ENCODE measurements at regions of chr5 and their contacts with region 1.

Region 1: GRCh38 chr5:80884929-80885328 is 75.2 kb upstream of the RASGRF2 start:
- DNase-seq: no peak
- ATAC-seq: no peak
- H3K4me3 ChIP-seq: no peak overlapping the region
- H3K27ac ChIP-seq: no peak overlapping the region
- H3K4me1 ChIP-seq: peaks cover 0 to 11% (median 3%) of the 10 kb centered on the region in 12 donors
- H3K27me3 ChIP-seq: no peaks in the 10 kb centered on the region
- CTCF ChIP-seq: no peak
- POLR2A ChIP-seq: no peak

Region 2: GRCh38 chr5:80825786-80826460 is 59.0 kb before region 1 on chr5:
- intact Hi-C with region 1: loop called in 1 of 10 experiments (anchors 10 kb)
- DNase-seq: no peak
- ATAC-seq: no peak
- H3K4me3 ChIP-seq: no peak overlapping the region
- H3K27ac ChIP-seq: no peak overlapping the region
- H3K4me1 ChIP-seq: peaks cover 0 to 10% (median 6%) of the 10 kb centered on the region in 12 donors
- H3K27me3 ChIP-seq: no peaks in the 10 kb centered on the region
- CTCF ChIP-seq: no peak
- POLR2A ChIP-seq: no peak

Region 3: GRCh38 chr5:80985600-80986228 is 100.8 kb after region 1 on chr5:
- intact Hi-C with region 1: no loop called
- DNase-seq: peak in 1 of 5 donors; percentile 37
- ATAC-seq: peak; percentile 37 to 87 (median 70)
- H3K4me3 ChIP-seq: peak overlapping the region in 9 of 12 donors; percentile 3 to 34 (median 29)
- H3K27ac ChIP-seq: peak overlapping the region; percentile 26 to 84 (median 65)
- H3K4me1 ChIP-seq: peaks cover 0 to 38% (median 7%) of the 10 kb centered on the region in 12 donors
- H3K27me3 ChIP-seq: no peaks in the 10 kb centered on the region
- CTCF ChIP-seq: no peak
- POLR2A ChIP-seq: peak in 1 of 2 donors; percentile 9